ENCODE measurements at regions of chr19 and their contacts with region 1.

Region 1: DNA sequence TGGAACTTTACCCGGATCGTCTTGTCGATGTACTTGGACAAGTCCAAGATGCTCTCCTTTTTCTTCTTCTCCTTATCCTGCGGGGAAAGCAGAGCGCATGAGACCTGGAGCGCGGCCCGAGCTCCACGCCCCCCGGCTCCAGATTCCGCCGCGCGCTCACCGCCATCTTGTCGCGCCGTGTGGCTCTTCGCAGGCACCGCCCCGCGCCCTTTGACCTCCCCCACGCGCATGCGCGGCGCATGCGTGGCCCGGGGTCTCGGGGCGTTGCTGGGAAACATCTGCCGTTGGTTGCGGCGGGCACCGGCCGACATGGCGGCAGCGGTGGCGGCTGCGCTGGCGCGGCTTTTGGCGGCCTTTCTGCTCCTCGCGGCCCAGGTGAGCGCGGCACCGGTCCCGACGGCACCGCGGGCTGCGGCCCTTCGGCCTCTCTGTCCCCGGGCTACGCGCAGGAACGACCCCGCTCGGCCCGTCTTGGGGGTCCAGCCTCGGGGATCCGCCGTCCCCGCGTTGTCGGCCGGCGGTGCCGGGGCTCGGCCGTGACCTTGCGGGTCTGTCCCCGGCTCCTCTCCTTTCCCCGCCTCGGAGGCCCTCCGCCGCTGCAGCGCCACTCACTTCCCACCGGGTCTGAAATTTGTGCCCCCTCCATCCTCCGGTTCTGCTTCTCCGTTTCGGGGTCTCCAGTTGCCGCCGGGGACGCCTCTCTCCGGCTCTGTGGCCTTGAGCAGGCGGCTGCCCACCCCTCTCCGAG is at the starts of genes LSM7 and SPPL2B:
- DNase-seq: peak; percentile 82 to 96 (median 87)
- H3K4me3 ChIP-seq: peak within 1 kb of the TSS; percentile 66 to 100 (median 97)
- H3K27ac ChIP-seq: peak within 1 kb of the TSS in 55 of 59 donors; percentile 18 to 93 (median 73)
- H3K27me3 ChIP-seq: no peaks in the 10 kb centered on the region
- CTCF ChIP-seq: peak in 27 of 56 donors; percentile 6 to 58 (median 29)
- total RNA-seq, gene LSM7: 25.2 to 59.5 (median 43.2) TPM
- total RNA-seq, gene SPPL2B: 40.9 to 134 (median 70.6) TPM

Region 2: GRCh38 chr19:2016041-2016807 is 312.4 kb before region 1 on chr19:
- intact Hi-C with region 1: loop called in 1 of 2 experiments (anchors 10 kb)
- DNase-seq: peak in 9 of 10 donors; percentile 39 to 77 (median 67)
- H3K4me3 ChIP-seq: peak overlapping the region in 55 of 59 donors; percentile 12 to 73 (median 46)
- H3K27ac ChIP-seq: peak overlapping the region in 57 of 59 donors; percentile 41 to 94 (median 82)
- H3K27me3 ChIP-seq: no peaks in the 10 kb centered on the region
- CTCF ChIP-seq: no peak

Region 3: GRCh38 chr19:2269244-2269947 is 59.2 kb before region 1 on chr19:
- intact Hi-C with region 1: loop called (anchors 5 kb)
- DNase-seq: peak; percentile 95 to 99 (median 98)
- H3K4me3 ChIP-seq: peak overlapping the region; percentile 54 to 100 (median 98)
- H3K27ac ChIP-seq: peak overlapping the region; percentile 86 to 99 (median 98)
- H3K27me3 ChIP-seq: no peaks in the 10 kb centered on the region
- CTCF ChIP-seq: peak in 40 of 56 donors; percentile 11 to 50 (median 32)

Region 4: GRCh38 chr19:2385053-2385721 is 56.6 kb after region 1 on chr19:
- intact Hi-C with region 1: loop called (anchors 2 to 5 kb)
- DNase-seq: peak in 3 of 10 donors; percentile 7 to 50 (median 20)
- H3K4me3 ChIP-seq: peak overlapping the region in 6 of 59 donors; percentile 7 to 30 (median 13)
- H3K27ac ChIP-seq: no peak overlapping the region
- H3K27me3 ChIP-seq: peaks cover 0 to 9% (median 0%) of the 10 kb centered on the region in 45 donors
- CTCF ChIP-seq: no peak

Region 5: DNA sequence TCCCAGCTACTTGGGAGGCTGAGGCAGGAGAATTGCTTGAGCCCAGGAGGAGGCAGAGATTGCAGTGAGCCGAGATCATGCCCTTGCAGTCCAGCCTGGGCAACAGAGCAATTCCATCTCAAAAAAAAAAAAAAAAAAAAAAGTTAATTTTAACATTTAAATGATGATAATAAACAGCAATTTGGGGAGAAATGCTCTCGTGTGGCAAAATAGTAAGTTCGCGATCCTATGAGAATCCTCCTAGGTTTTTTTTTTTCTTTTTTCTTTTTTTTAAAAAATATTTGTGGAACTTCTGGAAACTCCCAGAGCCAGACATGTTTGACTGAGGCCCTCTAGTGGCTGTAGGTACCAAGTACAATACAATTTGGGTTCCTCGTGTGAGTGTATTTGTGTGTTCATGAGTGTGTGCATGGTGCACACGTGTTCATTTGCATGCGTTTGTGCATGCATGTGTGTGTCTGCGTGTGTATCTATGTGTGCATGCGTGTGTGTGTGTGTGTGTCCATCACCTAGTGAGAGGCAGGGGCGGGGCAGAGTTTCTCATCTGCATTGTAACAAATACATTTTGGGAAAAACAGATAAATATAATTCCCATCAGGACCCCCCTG is 62.6 kb after region 1 on chr19:
- intact Hi-C with region 1: loop called in 1 of 2 experiments (anchors 2 kb)
- DNase-seq: peak in 4 of 10 donors; percentile 13 to 52 (median 38)
- H3K4me3 ChIP-seq: no peak overlapping the region
- H3K27ac ChIP-seq: no peak overlapping the region
- H3K27me3 ChIP-seq: peaks cover 0 to 9% (median 0%) of the 10 kb centered on the region in 45 donors
- CTCF ChIP-seq: peak; percentile 61 to 91 (median 81)

Region 6: GRCh38 chr19:2427429-2428320 is 99.1 kb after region 1 on chr19 and contains the start of gene TIMM13:
- intact Hi-C with region 1: loop called in 1 of 2 experiments (anchors 1 kb)
- DNase-seq: peak; percentile 94 to 99 (median 96)
- H3K4me3 ChIP-seq: peak within 1 kb of the TSS; percentile 62 to 100 (median 96)
- H3K27ac ChIP-seq: peak within 1 kb of the TSS; percentile 79 to 100 (median 98)
- H3K27me3 ChIP-seq: no peaks in the 10 kb centered on the region
- CTCF ChIP-seq: peak in 10 of 56 donors; percentile 2 to 39 (median 16)
- total RNA-seq, gene TIMM13: 36.0 to 71.8 (median 52.0) TPM

Measured in dorsolateral prefrontal cortex (tissue), 120 donors.